Activated B cell treated with CpG ODN at 0.5 μM for 24 hours (primary cell): ENCODE measurements at regions of chr16 and their contacts with region 1.

Region 1: DNA sequence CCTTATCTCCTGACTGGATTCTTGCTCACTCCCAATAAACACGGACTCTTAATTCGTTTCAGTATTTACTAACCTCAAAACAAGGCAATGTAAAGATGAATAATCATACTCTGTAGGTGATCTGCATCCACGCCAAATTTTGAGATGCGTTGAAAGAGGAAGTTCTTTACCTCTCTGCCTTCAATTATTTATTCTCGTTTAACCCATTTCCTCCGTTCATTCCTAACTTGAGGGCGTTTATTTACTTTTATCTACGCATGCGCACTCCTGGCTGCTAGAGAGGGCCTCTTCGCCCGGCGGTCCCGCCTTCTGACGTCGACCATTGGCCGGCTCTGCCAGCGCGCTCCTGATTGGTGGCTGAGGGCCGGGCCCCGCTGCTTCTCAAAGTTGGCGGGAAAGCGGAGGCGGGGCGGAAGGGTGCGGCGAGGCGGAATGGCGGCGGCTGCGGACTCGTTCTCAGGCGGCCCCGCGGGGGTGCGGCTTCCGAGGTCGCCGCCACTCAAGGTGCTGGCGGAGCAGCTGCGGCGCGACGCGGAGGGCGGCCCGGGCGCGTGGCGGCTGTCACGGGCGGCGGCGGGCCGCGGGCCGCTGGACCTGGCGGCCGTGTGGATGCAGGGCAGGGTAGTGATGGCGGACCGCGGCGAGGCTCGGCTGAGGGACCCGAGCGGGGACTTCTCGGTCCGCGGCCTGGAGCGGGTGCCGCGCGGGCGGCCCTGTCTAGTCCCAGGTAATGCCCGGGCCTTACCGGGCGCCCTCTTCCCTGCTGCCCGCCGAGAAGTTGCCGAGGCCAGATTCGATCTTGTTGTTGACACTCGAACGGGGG is at the start of gene RMI2:
- DNase-seq: peak; percentile 92
- ATAC-seq: peak; percentile 100
- H3K4me3 Mint-ChIP-seq: peak within 1 kb of the TSS; percentile 86
- H3K27ac Mint-ChIP-seq: peak within 1 kb of the TSS; percentile 80
- H3K4me1 Mint-ChIP-seq: peaks cover 37% of the 10 kb centered on the region
- H3K27me3 Mint-ChIP-seq: no peaks in the 10 kb centered on the region
- CTCF ChIP-seq: no peak
- total RNA-seq, gene RMI2: 8.1 TPM in 2 replicates

Region 2: GRCh38 chr16:11328172-11329070 is 16.8 kb before region 1 on chr16:
- CTCF ChIA-PET with region 1: no interaction called
- POLR2A ChIA-PET with region 1: interaction called, 4 read pairs
- intact Hi-C with region 1: loop called (anchors 1 kb)
- DNase-seq: peak; percentile 66
- ATAC-seq: peak; percentile 65
- H3K4me3 Mint-ChIP-seq: peak overlapping the region; percentile 80
- H3K27ac Mint-ChIP-seq: peak overlapping the region; percentile 94
- H3K4me1 Mint-ChIP-seq: peaks cover 72% of the 10 kb centered on the region
- H3K27me3 Mint-ChIP-seq: no peaks in the 10 kb centered on the region
- CTCF ChIP-seq: no peak

Region 3: GRCh38 chr16:11361701-11362451 is 16.6 kb after region 1 on chr16:
- CTCF ChIA-PET with region 1: no interaction called
- POLR2A ChIA-PET with region 1: no interaction called
- intact Hi-C with region 1: no loop called
- DNase-seq: no peak
- ATAC-seq: peak; percentile 49
- H3K4me3 Mint-ChIP-seq: peak overlapping the region; percentile 67
- H3K27ac Mint-ChIP-seq: peak overlapping the region; percentile 16
- H3K4me1 Mint-ChIP-seq: peaks cover 55% of the 10 kb centered on the region
- H3K27me3 Mint-ChIP-seq: peaks cover 21% of the 10 kb centered on the region
- CTCF ChIP-seq: no peak

Region 4: DNA sequence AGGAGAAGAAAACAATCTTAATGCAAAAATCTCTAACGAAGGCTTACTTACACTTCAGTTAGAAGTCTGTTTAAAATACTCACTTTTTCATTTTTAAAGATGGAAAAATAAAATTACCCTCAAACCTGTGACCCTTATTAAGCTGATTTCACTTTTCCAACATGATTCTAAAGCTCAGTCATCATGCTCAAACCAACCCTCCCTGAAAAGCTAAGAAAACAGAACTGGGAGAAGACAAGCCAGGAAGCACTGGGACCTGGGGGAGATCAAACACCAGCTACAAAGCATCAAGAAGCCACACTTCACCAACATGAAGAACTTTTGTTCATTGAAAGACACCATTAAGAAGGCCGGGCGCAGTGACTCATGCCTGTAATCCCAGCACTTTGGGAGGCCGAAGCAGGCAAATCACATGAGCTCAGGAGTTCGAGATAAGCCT is 152.6 kb after region 1 on chr16:
- CTCF ChIA-PET with region 1: no interaction called
- POLR2A ChIA-PET with region 1: no interaction called
- intact Hi-C with region 1: no loop called
- DNase-seq: no peak
- ATAC-seq: no peak
- H3K4me3 Mint-ChIP-seq: no peak overlapping the region
- H3K27ac Mint-ChIP-seq: no peak overlapping the region
- H3K4me1 Mint-ChIP-seq: peaks cover 26% of the 10 kb centered on the region
- H3K27me3 Mint-ChIP-seq: no peaks in the 10 kb centered on the region
- CTCF ChIP-seq: no peak